A549 (cell line): ENCODE measurements at regions of chr5 and their contacts with region 1.

Region 1: DNA sequence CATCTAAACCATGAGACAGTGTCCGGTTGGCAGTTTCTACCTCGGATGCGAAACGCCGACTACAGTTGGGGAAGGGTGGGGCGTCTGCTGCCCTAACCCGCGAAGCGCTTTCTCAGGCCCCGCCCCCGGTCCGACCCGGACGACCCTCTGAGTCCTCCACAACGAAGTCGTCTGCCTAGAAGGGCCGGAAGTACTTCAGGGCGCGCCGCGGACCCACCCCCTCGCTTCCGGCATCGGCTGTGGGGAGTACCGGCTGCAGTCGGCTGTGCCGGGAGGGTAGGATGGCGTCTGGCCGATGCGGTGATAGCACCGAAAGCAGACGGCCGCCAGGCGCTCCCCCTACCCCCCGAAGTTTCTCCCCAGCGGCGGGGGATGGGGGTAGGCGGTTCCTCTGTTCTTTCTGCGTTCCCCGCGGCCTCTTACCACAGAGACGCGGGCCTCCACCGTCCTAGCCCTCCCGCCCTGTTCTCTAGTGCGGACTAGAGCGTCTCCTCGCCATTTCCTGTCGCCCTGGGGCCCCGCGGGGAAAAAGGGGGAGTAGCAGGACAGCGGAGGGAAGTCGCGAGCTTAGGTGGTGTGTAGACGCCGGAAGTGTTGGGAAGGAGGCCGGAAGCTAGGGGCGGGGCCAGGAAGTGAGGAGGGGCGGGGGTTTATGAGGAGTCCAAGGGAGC is at the start of gene TRIM41:
- DNase-seq: peak; percentile 93 to 99
- ATAC-seq: peak; percentile 72 to 78
- H3K4me3 ChIP-seq: peak within 1 kb of the TSS; percentile 90
- H3K27ac ChIP-seq: peak within 1 kb of the TSS; percentile 95 to 98
- H3K4me1 ChIP-seq: peaks cover 16% of the 10 kb centered on the region
- CTCF ChIP-seq: no peak
- EP300 ChIP-seq: no peak
- POLR2A ChIP-seq: peak; percentile 60
- RAD21 ChIP-seq: 0 out of 5 replicates have a peak, but pooled peaks of 1 of the 2 experiments have one; percentile 15
- polyA plus RNA-seq, gene TRIM41: 17.0 and 22.7 TPM in 2 replicates

Region 2: DNA sequence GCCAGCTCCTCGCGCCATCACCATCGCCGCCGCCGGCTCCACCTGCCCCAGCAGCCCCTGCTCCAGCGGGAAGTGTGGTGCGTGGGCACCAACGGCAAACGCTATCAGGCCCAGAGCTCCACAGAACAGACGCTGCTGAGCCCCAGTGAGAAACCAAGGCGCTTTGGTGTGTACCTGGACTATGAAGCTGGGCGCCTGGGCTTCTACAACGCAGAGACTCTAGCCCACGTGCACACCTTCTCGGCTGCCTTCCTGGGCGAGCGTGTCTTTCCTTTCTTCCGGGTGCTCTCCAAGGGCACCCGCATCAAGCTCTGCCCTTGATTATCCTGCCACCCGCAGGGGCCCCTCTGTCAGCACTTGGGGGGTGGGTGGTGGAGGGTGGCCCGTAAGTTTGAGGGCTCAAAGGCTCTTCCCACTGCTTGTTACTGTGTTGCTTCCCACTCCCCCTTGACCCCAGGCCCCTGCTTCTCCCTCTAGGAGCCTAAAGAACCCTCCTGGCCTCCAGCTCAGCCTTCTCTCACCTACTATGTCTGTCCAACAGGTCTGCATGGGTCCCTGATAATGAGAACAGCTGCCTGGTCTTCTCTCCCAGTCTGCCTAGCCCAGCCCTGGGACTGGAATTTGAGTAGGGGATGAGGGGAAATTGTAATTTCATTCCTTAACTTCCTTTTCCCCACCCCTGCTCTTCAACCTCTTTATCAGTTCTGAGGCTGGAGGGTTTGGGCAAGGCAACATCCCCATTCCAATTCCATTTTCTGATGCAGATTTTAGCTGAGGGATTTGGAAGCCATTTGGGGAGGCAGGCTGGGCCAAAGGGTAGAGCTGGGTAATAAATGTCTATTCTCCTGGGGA is 11.5 kb after region 1 on chr5:
- CTCF ChIA-PET with region 1: interaction called, 4 read pairs
- POLR2A ChIA-PET with region 1: interaction called, 25 read pairs
- DNase-seq: no peak
- ATAC-seq: peak; percentile 19 to 45
- H3K4me3 ChIP-seq: no peak overlapping the region
- H3K27ac ChIP-seq: peak overlapping the region in 1 of 2 experiments; percentile 47; a peak in 1 of 6 replicates
- H3K4me1 ChIP-seq: peaks cover 11% of the 10 kb centered on the region; the same call in 1 of the 3 replicates
- CTCF ChIP-seq: no peak
- EP300 ChIP-seq: no peak
- POLR2A ChIP-seq: peak; percentile 9; the same call in 1 of the 2 replicates
- RAD21 ChIP-seq: no peak

Region 3: DNA sequence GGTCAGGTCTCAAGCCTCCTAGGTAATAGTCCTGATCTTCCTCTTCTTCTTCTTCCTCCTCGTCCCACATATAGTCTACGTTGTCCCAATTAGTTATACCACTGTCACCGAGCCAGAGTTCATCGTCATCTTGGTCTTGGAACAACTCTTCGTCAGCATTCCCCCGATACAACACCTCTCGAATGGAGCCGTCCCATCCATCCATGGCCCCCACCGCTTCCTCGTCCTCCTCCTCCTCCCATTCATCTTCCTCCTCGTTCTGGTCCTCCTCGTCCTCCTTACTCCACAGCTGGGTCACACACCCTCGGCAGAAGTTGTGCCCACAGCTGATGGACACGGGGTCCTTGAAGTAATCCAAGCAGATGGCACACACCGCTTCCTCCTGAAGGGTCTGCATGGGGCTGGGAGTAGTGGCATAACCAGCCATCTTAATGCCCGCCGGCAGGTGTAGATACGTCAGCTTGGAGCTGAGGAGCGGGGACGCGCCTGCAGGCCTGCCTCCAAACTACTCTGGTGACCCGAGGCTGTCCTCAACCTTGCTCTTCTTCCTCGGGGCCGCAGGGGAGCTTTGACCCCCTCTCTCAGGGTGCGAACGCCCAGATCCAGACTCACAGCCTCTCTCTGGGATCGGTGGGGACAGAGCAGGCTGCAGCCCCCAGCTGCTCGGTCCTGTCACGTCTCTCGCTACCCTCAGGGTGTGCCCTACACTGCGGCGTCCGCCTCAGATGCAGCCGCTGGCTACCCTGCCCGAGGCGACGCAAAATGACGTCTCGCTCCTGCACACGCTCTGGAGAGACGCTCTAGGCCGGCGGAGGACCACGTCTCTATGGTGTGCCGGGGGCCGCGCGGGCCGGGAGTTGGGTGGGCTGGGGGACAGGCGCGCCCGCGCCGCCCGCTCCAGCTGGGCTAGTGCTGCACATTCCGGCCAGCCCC is 37.5 kb after region 1 on chr5 and contains the start of gene TRIM52:
- CTCF ChIA-PET with region 1: no interaction called
- POLR2A ChIA-PET with region 1: interaction called, 13 read pairs
- DNase-seq: peak; percentile 68 to 93
- ATAC-seq: peak; percentile 85 to 92
- H3K4me3 ChIP-seq: peak within 1 kb of the TSS; percentile 94
- H3K27ac ChIP-seq: peak within 1 kb of the TSS; percentile 98 to 99
- H3K4me1 ChIP-seq: peaks cover 18% of the 10 kb centered on the region
- CTCF ChIP-seq: no peak
- EP300 ChIP-seq: no peak
- POLR2A ChIP-seq: peak; percentile 96
- RAD21 ChIP-seq: no peak
- polyA plus RNA-seq, gene TRIM52: 10.9 and 11.1 TPM in 2 replicates